Activated CD4-positive, alpha-beta T cell treated with anti-CD3 and anti-CD28 coated beads for 36 hours (primary cell): ENCODE measurements at regions of chr2 and their contacts with region 1.

Region 1: GRCh38 chr2:156400706-156401678 is 35.2 kb upstream of the GPD2 start:
- DNase-seq: peak; percentile 85
- ATAC-seq: peak; percentile 64
- H3K4me3 Mint-ChIP-seq: peak overlapping the region; percentile 85
- H3K27ac Mint-ChIP-seq: peak overlapping the region; percentile 95
- H3K4me1 Mint-ChIP-seq: peaks cover 43% of the 10 kb centered on the region
- H3K27me3 Mint-ChIP-seq: peaks cover 2% of the 10 kb centered on the region

Region 2: GRCh38 chr2:156341452-156342253 is 59.3 kb before region 1 on chr2:
- CTCF ChIA-PET with region 1: interaction called, 7 read pairs
- POLR2A ChIA-PET with region 1: interaction called, 30 read pairs
- intact Hi-C with region 1: loop called (anchors 1 kb)
- DNase-seq: peak; percentile 94
- ATAC-seq: peak; percentile 79
- H3K4me3 Mint-ChIP-seq: peak overlapping the region; percentile 84
- H3K27ac Mint-ChIP-seq: peak overlapping the region; percentile 95
- H3K4me1 Mint-ChIP-seq: peaks cover 53% of the 10 kb centered on the region
- H3K27me3 Mint-ChIP-seq: no peaks in the 10 kb centered on the region

Region 3: DNA sequence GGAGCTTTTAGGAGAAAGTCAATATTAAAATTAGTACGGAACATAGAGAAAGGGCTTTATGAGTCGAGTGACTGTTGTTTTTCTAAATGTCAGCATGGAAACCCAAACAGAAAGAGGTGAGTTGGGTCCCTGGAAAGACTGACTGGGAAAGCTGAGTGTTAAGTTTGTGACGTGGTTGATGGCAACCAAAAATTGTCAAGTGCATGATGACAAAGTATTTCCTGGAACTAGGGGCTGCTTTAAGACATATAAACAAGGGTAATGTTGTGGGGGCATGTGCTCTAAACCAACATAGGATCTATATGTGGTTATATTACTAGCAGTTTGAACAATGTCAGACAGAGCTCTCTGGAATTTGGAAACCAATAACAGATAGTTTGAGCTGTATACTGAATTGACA is 15.8 kb before region 1 on chr2:
- CTCF ChIA-PET with region 1: interaction called, 21 read pairs
- POLR2A ChIA-PET with region 1: interaction called, 11 read pairs
- intact Hi-C with region 1: loop called in 1 of 2 experiments (anchors 1 kb)
- DNase-seq: peak; percentile 43
- ATAC-seq: peak; percentile 85
- H3K4me3 Mint-ChIP-seq: peak overlapping the region; percentile 14
- H3K27ac Mint-ChIP-seq: peak overlapping the region; percentile 82
- H3K4me1 Mint-ChIP-seq: peaks cover 29% of the 10 kb centered on the region
- H3K27me3 Mint-ChIP-seq: peaks cover 2% of the 10 kb centered on the region

Region 4: GRCh38 chr2:156435715-156436496 is 34.9 kb after region 1 on chr2 and contains the start of gene GPD2:
- CTCF ChIA-PET with region 1: no interaction called
- POLR2A ChIA-PET with region 1: no interaction called
- intact Hi-C with region 1: loop called (anchors 1 kb)
- DNase-seq: peak; percentile 72
- ATAC-seq: peak; percentile 74
- H3K4me3 Mint-ChIP-seq: peak within 1 kb of the TSS; percentile 87
- H3K27ac Mint-ChIP-seq: peak within 1 kb of the TSS; percentile 96
- H3K4me1 Mint-ChIP-seq: peaks cover 25% of the 10 kb centered on the region
- H3K27me3 Mint-ChIP-seq: no peaks in the 10 kb centered on the region
- total RNA-seq, gene GPD2: 31.6 to 32.6 TPM

Region 5: DNA sequence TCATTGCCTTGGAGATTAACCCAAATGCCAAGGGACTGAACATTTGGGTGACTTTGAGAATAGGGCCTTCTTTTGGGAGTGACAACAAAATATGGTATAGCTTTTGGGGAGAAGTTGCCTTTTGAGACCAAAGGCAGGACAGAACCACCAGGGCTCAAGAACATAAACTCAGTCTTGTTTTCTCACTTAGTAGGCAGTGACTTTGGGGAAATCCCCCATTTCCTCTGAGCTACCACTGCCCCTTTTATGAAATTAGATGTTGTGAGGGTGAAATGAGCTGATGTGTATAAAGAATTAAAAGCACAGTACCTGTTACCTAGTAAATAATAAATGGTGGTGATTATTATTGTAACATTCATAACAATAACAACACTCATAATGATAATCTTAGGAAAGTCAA is 71.7 kb after region 1 on chr2:
- CTCF ChIA-PET with region 1: interaction called, 4 read pairs
- POLR2A ChIA-PET with region 1: no interaction called
- intact Hi-C with region 1: loop called in 1 of 2 experiments (anchors 5 kb)
- DNase-seq: no peak
- ATAC-seq: peak; percentile 70
- H3K4me3 Mint-ChIP-seq: no peak overlapping the region
- H3K27ac Mint-ChIP-seq: no peak overlapping the region
- H3K4me1 Mint-ChIP-seq: peaks cover 41% of the 10 kb centered on the region
- H3K27me3 Mint-ChIP-seq: no peaks in the 10 kb centered on the region

Region 6: DNA sequence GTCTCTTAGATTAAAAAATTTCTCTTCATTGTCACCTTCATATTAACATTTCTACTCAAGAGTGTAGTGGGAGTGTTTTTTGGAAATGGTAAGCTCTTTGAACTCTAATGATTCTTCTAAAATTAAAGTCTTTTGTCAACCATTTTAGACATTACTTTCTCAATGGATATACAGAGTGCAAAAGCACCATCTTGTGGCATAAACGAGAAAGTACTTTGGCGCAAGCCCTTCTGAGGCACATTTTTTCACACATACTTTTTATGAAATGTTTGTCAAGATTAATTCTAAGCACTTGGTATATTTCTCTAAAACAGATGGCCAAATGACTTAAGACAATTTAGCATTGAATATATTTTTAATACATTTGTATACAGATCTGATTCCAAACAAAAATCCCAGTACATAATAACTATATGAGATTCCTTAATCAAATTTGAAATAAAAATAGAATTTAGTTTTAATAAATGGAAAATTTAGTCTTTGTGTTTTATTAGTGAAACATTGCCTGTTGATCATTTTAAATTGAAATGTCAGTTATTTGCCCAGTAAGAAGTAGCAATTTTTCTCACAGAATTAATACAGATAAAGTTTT is 793.2 kb after region 1 on chr2:
- CTCF ChIA-PET with region 1: no interaction called
- POLR2A ChIA-PET with region 1: no interaction called
- intact Hi-C with region 1: loop called in 1 of 2 experiments (anchors 10 kb)
- DNase-seq: peak; percentile 21
- ATAC-seq: peak; percentile 63
- H3K4me3 Mint-ChIP-seq: no peak overlapping the region
- H3K27ac Mint-ChIP-seq: no peak overlapping the region
- H3K4me1 Mint-ChIP-seq: no peaks in the 10 kb centered on the region
- H3K27me3 Mint-ChIP-seq: peaks cover 2% of the 10 kb centered on the region